Right cardiac atrium (tissue), 5 donors: ENCODE measurements at regions of chr1 and their contacts with region 1.

Region 1: DNA sequence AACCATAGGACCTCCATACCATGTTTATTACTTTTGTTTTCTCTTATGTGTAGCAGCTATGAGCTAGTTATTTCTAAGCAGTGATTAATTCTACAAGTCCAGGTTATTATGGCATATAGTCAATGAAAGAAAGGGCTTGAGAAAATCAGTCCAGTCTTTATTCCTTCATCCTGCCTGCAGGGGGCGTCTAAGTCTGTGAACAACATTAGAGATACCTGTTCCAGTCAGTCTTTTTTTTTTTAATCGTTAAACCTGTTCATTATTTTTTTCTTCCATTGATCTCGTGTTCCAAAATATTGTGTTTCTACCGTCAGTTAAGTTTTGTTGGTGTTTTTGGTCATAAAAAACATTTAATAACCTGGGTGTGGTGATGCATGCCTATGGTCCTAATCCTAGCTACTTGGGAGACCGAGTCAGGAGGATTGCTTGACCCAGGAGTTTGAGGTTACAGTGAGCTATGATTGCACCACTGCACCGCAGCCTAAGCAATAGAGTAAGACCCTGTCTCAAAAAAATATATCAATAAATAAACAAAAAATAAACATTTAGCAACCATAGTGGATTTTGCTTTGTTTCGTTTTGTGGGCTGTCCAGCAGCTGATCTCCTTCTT is 29.4 kb upstream of the CD2 start:
- DNase-seq: peak in 2 of 3 donors; percentile 47 to 66
- ATAC-seq: no peak
- H3K4me3 ChIP-seq: no peak overlapping the region
- H3K27ac ChIP-seq: no peak overlapping the region
- H3K4me1 ChIP-seq: no peaks in the 10 kb centered on the region
- H3K27me3 ChIP-seq: no peaks in the 10 kb centered on the region

Region 2: GRCh38 chr1:116806245-116806644 is 81.4 kb after region 1 on chr1:
- intact Hi-C with region 1: no loop called
- DNase-seq: no peak
- ATAC-seq: no peak
- H3K4me3 ChIP-seq: no peak overlapping the region
- H3K27ac ChIP-seq: no peak overlapping the region
- H3K4me1 ChIP-seq: no peaks in the 10 kb centered on the region
- H3K27me3 ChIP-seq: no peaks in the 10 kb centered on the region

Region 3: GRCh38 chr1:117051224-117052064 is 326.6 kb after region 1 on chr1:
- intact Hi-C with region 1: loop called in 1 of 4 experiments (anchors 5 kb)
- DNase-seq: peak in 1 of 3 donors; percentile 51
- ATAC-seq: peak; percentile 61 to 64
- H3K4me3 ChIP-seq: peak overlapping the region; percentile 41
- H3K27ac ChIP-seq: no peak overlapping the region
- H3K4me1 ChIP-seq: no peaks in the 10 kb centered on the region
- H3K27me3 ChIP-seq: no peaks in the 10 kb centered on the region